Endothelial cell of umbilical vein (primary cell): ENCODE measurements at regions of chr12 and their contacts with region 1.

Region 1: DNA sequence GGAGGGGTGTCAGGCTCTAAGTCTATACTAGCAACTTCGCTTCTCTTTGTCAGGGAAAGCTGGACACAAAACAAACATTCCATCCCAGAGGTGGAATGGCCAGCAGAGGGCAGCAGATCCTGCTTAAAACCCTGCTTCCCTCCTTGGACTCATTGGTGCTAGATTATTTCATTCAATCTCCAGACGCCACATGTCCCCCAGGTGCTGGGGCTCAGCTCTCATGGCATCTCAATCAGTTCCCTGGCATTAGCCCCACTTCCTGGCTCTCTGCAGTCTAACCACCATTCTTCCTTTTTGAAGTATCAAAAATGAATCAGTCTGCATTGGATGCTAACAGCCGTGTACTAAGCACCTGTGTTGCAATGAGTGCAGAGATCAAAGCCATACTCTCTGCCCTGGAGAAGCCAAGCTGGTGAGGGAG is 8.1 kb upstream of the PPP1R1A start:
- DNase-seq: peak; percentile 58
- H3K4me3 ChIP-seq: no peak overlapping the region
- H3K27ac ChIP-seq: no peak overlapping the region
- H3K4me1 ChIP-seq: no peaks in the 10 kb centered on the region
- H3K27me3 ChIP-seq: peaks cover 17 to 18% of the 10 kb centered on the region in 2 experiments
- CTCF ChIP-seq: peak; percentile 86 to 89
- POLR2A ChIP-seq: no peak

Region 2: GRCh38 chr12:54579696-54580333 is 16.7 kb before region 1 on chr12:
- CTCF ChIA-PET with region 1: interaction called, 27 read pairs
- POLR2A ChIA-PET with region 1: no interaction called
- dilution Hi-C with region 1: no loop called
- intact Hi-C with region 1: no loop called
- DNase-seq: peak; percentile 68
- H3K4me3 ChIP-seq: no peak overlapping the region
- H3K27ac ChIP-seq: no peak overlapping the region
- H3K4me1 ChIP-seq: no peaks in the 10 kb centered on the region
- H3K27me3 ChIP-seq: peaks cover 2 to 8% of the 10 kb centered on the region in 2 experiments
- CTCF ChIP-seq: peak; percentile 95 to 99
- POLR2A ChIP-seq: no peak

Region 3: GRCh38 chr12:54585243-54585642 is 11.3 kb before region 1 on chr12:
- CTCF ChIA-PET with region 1: interaction called, 27 read pairs
- POLR2A ChIA-PET with region 1: no interaction called
- dilution Hi-C with region 1: no loop called
- intact Hi-C with region 1: no loop called
- DNase-seq: no peak
- H3K4me3 ChIP-seq: no peak overlapping the region
- H3K27ac ChIP-seq: no peak overlapping the region
- H3K4me1 ChIP-seq: no peaks in the 10 kb centered on the region
- H3K27me3 ChIP-seq: peaks cover 37 to 42% of the 10 kb centered on the region in 2 experiments
- CTCF ChIP-seq: no peak
- POLR2A ChIP-seq: no peak

Region 4: GRCh38 chr12:54858562-54858961 is 262.0 kb after region 1 on chr12:
- CTCF ChIA-PET with region 1: no interaction called
- POLR2A ChIA-PET with region 1: no interaction called
- dilution Hi-C with region 1: no loop called
- intact Hi-C with region 1: no loop called
- DNase-seq: no peak
- H3K4me3 ChIP-seq: no peak overlapping the region
- H3K27ac ChIP-seq: no peak overlapping the region
- H3K4me1 ChIP-seq: no peaks in the 10 kb centered on the region
- H3K27me3 ChIP-seq: peaks cover 3 to 17% of the 10 kb centered on the region in 2 experiments
- CTCF ChIP-seq: no peak
- POLR2A ChIP-seq: no peak

Region 5: GRCh38 chr12:54984658-54985376 is 388.3 kb after region 1 on chr12 and contains the start of gene TESPA1:
- CTCF ChIA-PET with region 1: no interaction called
- POLR2A ChIA-PET with region 1: no interaction called
- dilution Hi-C with region 1: no loop called
- intact Hi-C with region 1: no loop called
- DNase-seq: no peak
- H3K4me3 ChIP-seq: no peak within 1 kb of the TSS
- H3K27ac ChIP-seq: no peak within 1 kb of the TSS
- H3K4me1 ChIP-seq: no peaks in the 10 kb centered on the region
- H3K27me3 ChIP-seq: peaks cover 0 to 1% of the 10 kb centered on the region in 2 experiments
- CTCF ChIP-seq: no peak
- POLR2A ChIP-seq: no peak
- total RNA-seq, gene TESPA1: not detected in 2 replicates